Activated CD4-positive, alpha-beta T cell treated with anti-CD3 and anti-CD28 coated beads for 36 hours (primary cell): ENCODE measurements at regions of chr10 and their contacts with region 1.

Region 1: GRCh38 chr10:60733189-60733822 is 45.0 kb upstream of the CDK1 start:
- DNase-seq: peak; percentile 69
- ATAC-seq: peak; percentile 59
- H3K4me3 Mint-ChIP-seq: peak overlapping the region; percentile 90
- H3K27ac Mint-ChIP-seq: no peak overlapping the region
- H3K4me1 Mint-ChIP-seq: peaks cover 32% of the 10 kb centered on the region
- H3K27me3 Mint-ChIP-seq: no peaks in the 10 kb centered on the region

Region 2: GRCh38 chr10:60434418-60435046 is 298.8 kb before region 1 on chr10:
- CTCF ChIA-PET with region 1: no interaction called
- POLR2A ChIA-PET with region 1: no interaction called
- intact Hi-C with region 1: no loop called
- DNase-seq: peak; percentile 17
- ATAC-seq: no peak
- H3K4me3 Mint-ChIP-seq: no peak overlapping the region
- H3K27ac Mint-ChIP-seq: no peak overlapping the region
- H3K4me1 Mint-ChIP-seq: peaks cover 6% of the 10 kb centered on the region
- H3K27me3 Mint-ChIP-seq: no peaks in the 10 kb centered on the region

Region 3: GRCh38 chr10:60662917-60663614 is 70.2 kb before region 1 on chr10:
- CTCF ChIA-PET with region 1: interaction called, 4 read pairs
- POLR2A ChIA-PET with region 1: no interaction called
- intact Hi-C with region 1: loop called (anchors 2 kb)
- DNase-seq: no peak
- ATAC-seq: peak; percentile 49
- H3K4me3 Mint-ChIP-seq: no peak overlapping the region
- H3K27ac Mint-ChIP-seq: peak overlapping the region; percentile 12
- H3K4me1 Mint-ChIP-seq: peaks cover 48% of the 10 kb centered on the region
- H3K27me3 Mint-ChIP-seq: no peaks in the 10 kb centered on the region

Region 4: GRCh38 chr10:60710041-60710440 is 23.3 kb before region 1 on chr10:
- CTCF ChIA-PET with region 1: no interaction called
- POLR2A ChIA-PET with region 1: no interaction called
- intact Hi-C with region 1: no loop called
- DNase-seq: no peak
- ATAC-seq: no peak
- H3K4me3 Mint-ChIP-seq: no peak overlapping the region
- H3K27ac Mint-ChIP-seq: no peak overlapping the region
- H3K4me1 Mint-ChIP-seq: peaks cover 55% of the 10 kb centered on the region
- H3K27me3 Mint-ChIP-seq: no peaks in the 10 kb centered on the region

Region 5: DNA sequence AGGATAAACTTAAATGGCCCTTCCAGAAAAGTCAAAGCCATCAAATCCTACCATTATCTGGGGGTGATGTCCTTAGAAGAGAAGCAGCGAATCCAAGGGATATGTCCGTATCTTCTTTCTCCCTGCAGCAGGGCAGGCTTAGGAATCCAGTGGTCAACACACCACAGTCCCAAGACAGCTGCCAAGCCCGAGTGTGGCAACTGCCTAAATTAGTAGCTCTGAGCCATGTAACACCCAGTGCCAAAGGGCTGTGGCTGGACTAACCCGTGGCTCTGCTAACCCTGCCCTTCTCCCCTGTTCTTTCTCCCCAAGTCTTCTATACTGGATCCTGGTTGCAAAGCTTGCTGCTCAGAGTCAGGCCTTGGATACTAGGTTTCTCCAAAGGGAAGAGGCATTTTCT is 119.8 kb after region 1 on chr10:
- CTCF ChIA-PET with region 1: no interaction called
- POLR2A ChIA-PET with region 1: no interaction called
- intact Hi-C with region 1: no loop called
- DNase-seq: no peak
- ATAC-seq: no peak
- H3K4me3 Mint-ChIP-seq: no peak overlapping the region
- H3K27ac Mint-ChIP-seq: no peak overlapping the region
- H3K4me1 Mint-ChIP-seq: no peaks in the 10 kb centered on the region
- H3K27me3 Mint-ChIP-seq: no peaks in the 10 kb centered on the region